CD4-positive, alpha-beta T cell (primary cell): ENCODE measurements at regions of chr5 and their contacts with region 1.

Region 1: GRCh38 chr5:177390363-177391300 is 6.4 kb downstream of the SLC34A1 start:
- DNase-seq: peak; percentile 80 to 94 (median 84)
- ATAC-seq: peak; percentile 76
- H3K4me3 ChIP-seq: no peak overlapping the region
- H3K4me3 Mint-ChIP-seq: peak overlapping the region; percentile 52
- H3K27ac ChIP-seq: peak overlapping the region; percentile 29 to 72
- H3K27ac Mint-ChIP-seq: peak overlapping the region; percentile 80
- H3K4me1 ChIP-seq: peaks cover 59% of the 10 kb centered on the region
- H3K4me1 Mint-ChIP-seq: peaks cover 35% of the 10 kb centered on the region
- H3K27me3 ChIP-seq: no peaks in the 10 kb centered on the region
- H3K27me3 Mint-ChIP-seq: no peaks in the 10 kb centered on the region
- CTCF ChIP-seq: peak; percentile 95

Region 2: DNA sequence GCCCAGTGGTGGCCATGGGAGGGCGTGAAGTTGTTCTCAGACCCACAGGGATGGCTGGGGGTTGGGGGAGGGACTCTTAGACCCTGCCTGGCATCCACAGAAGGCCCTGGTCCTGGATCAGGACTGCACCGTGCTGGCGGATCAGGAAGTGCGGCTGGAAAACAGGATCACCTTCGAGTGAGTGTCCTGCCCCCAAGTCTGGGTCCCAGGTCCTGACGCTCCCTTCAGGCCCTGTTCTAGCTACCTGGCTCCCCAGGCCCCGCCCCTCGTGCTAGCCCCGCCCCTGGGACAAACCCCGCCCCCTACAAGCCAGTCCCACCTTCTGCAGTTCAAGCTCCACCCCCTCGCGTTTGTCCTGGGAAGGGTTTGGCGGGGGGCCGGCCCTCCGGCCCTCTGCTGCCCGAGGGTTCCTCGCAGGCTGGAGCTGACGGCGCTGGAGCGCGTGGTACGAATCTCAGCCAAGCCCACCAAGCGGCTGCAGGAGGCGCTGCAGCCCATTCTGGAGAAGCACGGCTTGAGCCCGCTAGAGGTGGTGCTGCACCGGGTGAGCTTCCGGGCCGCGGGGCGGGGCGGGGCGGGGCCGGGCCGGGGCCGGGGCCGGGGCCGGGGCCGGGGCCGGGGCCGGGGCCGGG is 20.0 kb before region 1 on chr5:
- CTCF ChIA-PET with region 1: interaction called, 60 read pairs
- POLR2A ChIA-PET with region 1: interaction called, 16 read pairs
- intact Hi-C with region 1: no loop called
- DNase-seq: peak in 12 of 14 experiments; percentile 29 to 90 (median 62)
- ATAC-seq: peak; percentile 74
- H3K4me3 ChIP-seq: peak overlapping the region; percentile 48
- H3K4me3 Mint-ChIP-seq: peak overlapping the region; percentile 42
- H3K27ac ChIP-seq: peak overlapping the region; percentile 23 to 27
- H3K27ac Mint-ChIP-seq: peak overlapping the region; percentile 33
- H3K4me1 ChIP-seq: peaks cover 82% of the 10 kb centered on the region
- H3K4me1 Mint-ChIP-seq: peaks cover 67% of the 10 kb centered on the region
- H3K27me3 ChIP-seq: no peaks in the 10 kb centered on the region
- H3K27me3 Mint-ChIP-seq: no peaks in the 10 kb centered on the region
- CTCF ChIP-seq: no peak

Region 3: GRCh38 chr5:177431317-177432142 is 40.9 kb after region 1 on chr5:
- CTCF ChIA-PET with region 1: interaction called, 11 read pairs
- POLR2A ChIA-PET with region 1: interaction called, 35 read pairs
- intact Hi-C with region 1: loop called in 1 of 2 experiments (anchors 1 kb)
- DNase-seq: peak in 12 of 14 experiments; percentile 45 to 93 (median 70)
- ATAC-seq: peak; percentile 43
- H3K4me3 ChIP-seq: peak overlapping the region; percentile 65
- H3K4me3 Mint-ChIP-seq: peak overlapping the region; percentile 95
- H3K27ac ChIP-seq: peak overlapping the region; percentile 87 to 92
- H3K27ac Mint-ChIP-seq: peak overlapping the region; percentile 96
- H3K4me1 ChIP-seq: peaks cover 96% of the 10 kb centered on the region
- H3K4me1 Mint-ChIP-seq: peaks cover 62% of the 10 kb centered on the region
- H3K27me3 ChIP-seq: no peaks in the 10 kb centered on the region
- H3K27me3 Mint-ChIP-seq: no peaks in the 10 kb centered on the region
- CTCF ChIP-seq: no peak

Region 4: GRCh38 chr5:177454397-177455035 is 63.9 kb after region 1 on chr5:
- CTCF ChIA-PET with region 1: interaction called, 115 read pairs
- POLR2A ChIA-PET with region 1: interaction called, 75 read pairs
- intact Hi-C with region 1: loop called (anchors 1 kb)
- DNase-seq: peak; percentile 87 to 97 (median 94)
- ATAC-seq: peak; percentile 45
- H3K4me3 ChIP-seq: peak overlapping the region; percentile 71
- H3K4me3 Mint-ChIP-seq: peak overlapping the region; percentile 89
- H3K27ac ChIP-seq: peak overlapping the region; percentile 90 to 95
- H3K27ac Mint-ChIP-seq: peak overlapping the region; percentile 93
- H3K4me1 ChIP-seq: peaks cover 52% of the 10 kb centered on the region
- H3K4me1 Mint-ChIP-seq: peaks cover 43% of the 10 kb centered on the region
- H3K27me3 ChIP-seq: no peaks in the 10 kb centered on the region
- H3K27me3 Mint-ChIP-seq: no peaks in the 10 kb centered on the region
- CTCF ChIP-seq: peak; percentile 79

Region 5: DNA sequence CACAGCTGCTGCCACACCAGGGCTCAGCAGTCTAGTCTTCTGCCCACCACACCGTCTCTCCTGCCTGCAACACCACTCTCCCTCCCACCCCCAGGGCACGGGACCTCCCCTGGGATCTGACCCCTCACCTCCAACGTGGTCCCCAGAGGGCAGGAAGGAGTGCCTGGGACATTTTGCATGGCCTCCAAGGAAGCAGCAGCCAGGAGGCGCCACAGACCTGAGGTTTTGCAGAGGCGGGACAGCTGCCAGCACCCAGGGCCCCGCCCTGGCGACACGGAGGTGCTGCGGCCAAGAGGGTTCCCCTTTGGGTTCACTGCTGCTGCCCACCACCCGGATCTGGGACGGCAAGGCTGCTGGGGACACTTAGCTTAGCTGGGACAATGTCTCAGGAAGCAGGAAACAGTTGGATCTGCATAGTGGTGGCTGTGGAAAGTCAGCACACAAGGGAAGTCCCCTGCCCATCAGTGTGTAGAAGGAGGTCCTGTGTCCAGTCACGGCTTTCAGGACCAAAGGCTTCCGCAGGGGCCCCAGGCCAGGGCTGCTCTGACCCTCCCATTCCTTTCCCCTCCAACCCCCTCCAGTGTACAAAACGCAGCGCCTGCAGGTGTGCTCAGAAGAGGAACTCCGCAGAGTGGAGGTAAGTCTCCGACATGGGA is 591.6 kb after region 1 on chr5:
- CTCF ChIA-PET with region 1: no interaction called
- POLR2A ChIA-PET with region 1: no interaction called
- intact Hi-C with region 1: no loop called
- DNase-seq: peak in 6 of 14 experiments; percentile 8 to 33 (median 22)
- ATAC-seq: no peak
- H3K4me3 ChIP-seq: no peak overlapping the region
- H3K4me3 Mint-ChIP-seq: no peak overlapping the region
- H3K27ac ChIP-seq: no peak overlapping the region
- H3K27ac Mint-ChIP-seq: no peak overlapping the region
- H3K4me1 ChIP-seq: peaks cover 17% of the 10 kb centered on the region
- H3K4me1 Mint-ChIP-seq: peaks cover 5% of the 10 kb centered on the region
- H3K27me3 ChIP-seq: peaks cover 51 to 53% of the 10 kb centered on the region in 2 experiments
- H3K27me3 Mint-ChIP-seq: peaks cover 49% of the 10 kb centered on the region
- CTCF ChIP-seq: no peak

Region 6: GRCh38 chr5:178069909-178070308 is 679.3 kb after region 1 on chr5:
- CTCF ChIA-PET with region 1: no interaction called
- POLR2A ChIA-PET with region 1: no interaction called
- intact Hi-C with region 1: loop called in 1 of 2 experiments (anchors 10 kb)
- DNase-seq: peak in 8 of 14 experiments; percentile 9 to 50 (median 19)
- ATAC-seq: peak; percentile 44
- H3K4me3 ChIP-seq: no peak overlapping the region
- H3K4me3 Mint-ChIP-seq: no peak overlapping the region
- H3K27ac ChIP-seq: no peak overlapping the region
- H3K27ac Mint-ChIP-seq: no peak overlapping the region
- H3K4me1 ChIP-seq: peaks cover 6% of the 10 kb centered on the region
- H3K4me1 Mint-ChIP-seq: peaks cover 10% of the 10 kb centered on the region
- H3K27me3 ChIP-seq: peaks cover 0 to 2% of the 10 kb centered on the region in 2 experiments
- H3K27me3 Mint-ChIP-seq: peaks cover 5% of the 10 kb centered on the region
- CTCF ChIP-seq: no peak